BJ (cell line): ENCODE measurements at regions of chr5 and their contacts with region 1.

Region 1: DNA sequence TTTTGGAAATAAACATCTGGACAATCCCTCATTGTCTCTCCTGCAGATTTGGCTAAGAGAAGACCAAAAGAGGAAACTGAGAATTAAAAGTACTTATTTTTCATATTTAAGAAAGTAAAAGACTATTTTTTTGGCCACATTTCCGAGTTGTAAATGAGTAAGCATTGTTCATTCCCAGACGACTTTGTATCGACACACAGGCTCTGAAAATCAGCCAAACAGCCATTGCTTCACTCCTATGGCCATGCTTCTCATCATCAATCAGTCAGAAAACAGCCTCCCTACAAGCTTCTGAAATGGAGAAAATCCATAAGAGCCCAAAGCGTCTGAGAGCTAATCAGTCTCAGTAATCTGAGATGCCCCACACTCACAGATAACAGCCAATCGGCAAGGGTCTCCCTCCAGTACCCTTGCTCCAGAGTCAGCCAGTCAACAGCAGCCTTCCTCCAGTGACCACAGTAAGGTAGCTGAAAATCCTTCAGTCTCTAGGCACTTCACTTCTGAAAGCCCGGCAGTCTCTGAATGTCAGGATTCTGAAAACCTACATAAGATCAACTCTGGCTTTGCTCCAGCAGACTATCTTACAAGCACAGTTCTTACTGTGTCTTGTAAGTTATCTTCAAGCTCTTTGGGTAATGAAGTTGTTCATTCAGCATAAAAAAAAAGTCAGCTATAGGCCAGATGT is 30.9 kb downstream of the CDO1 start:
- DNase-seq: no peak
- H3K4me3 ChIP-seq: no peak overlapping the region
- H3K27me3 ChIP-seq: 0 out of 2 replicates have a peak, but pooled peaks cover 4% of the 10 kb centered on the region
- CTCF ChIP-seq: no peak

Region 2: DNA sequence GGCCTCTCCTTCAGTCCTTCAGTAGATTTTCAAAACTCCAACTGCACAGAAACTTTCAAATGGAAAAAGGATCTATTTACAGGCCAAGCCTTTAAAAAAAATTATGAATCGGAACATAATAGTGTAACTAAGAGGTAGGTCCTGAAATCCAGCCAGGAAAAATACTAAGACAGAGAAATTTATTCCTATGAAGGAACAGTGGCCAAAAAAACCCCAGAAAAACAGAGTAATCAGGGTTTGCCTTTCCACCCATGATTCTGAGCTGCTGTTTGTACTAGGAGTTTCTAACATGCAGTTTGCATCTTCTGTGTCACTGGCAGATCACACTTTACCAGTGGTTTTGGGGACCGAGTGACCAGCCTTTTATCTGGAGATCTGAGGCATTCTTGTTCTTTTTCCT is 66.6 kb before region 1 on chr5:
- CTCF ChIA-PET with region 1: no interaction called
- POLR2A ChIA-PET with region 1: interaction called, 10 read pairs
- DNase-seq: no peak
- H3K4me3 ChIP-seq: no peak overlapping the region
- H3K27me3 ChIP-seq: no peaks in the 10 kb centered on the region
- CTCF ChIP-seq: no peak